ENCODE measurements at regions of chr13 and their contacts with region 1.

Region 1: GRCh38 chr13:73081256-73081915 is 22.6 kb downstream of the KLF5 start:
- DNase-seq: no peak
- ATAC-seq: no peak
- H3K4me3 ChIP-seq: no peak overlapping the region
- H3K27ac ChIP-seq: no peak overlapping the region
- H3K4me1 ChIP-seq: no peaks in the 10 kb centered on the region
- H3K27me3 ChIP-seq: no peaks in the 10 kb centered on the region

Region 2: GRCh38 chr13:73385848-73386247 is 304.5 kb after region 1 on chr13:
- intact Hi-C with region 1: no loop called
- DNase-seq: no peak
- ATAC-seq: no peak
- H3K4me3 ChIP-seq: no peak overlapping the region
- H3K27ac ChIP-seq: no peak overlapping the region
- H3K4me1 ChIP-seq: no peaks in the 10 kb centered on the region
- H3K27me3 ChIP-seq: no peaks in the 10 kb centered on the region

Region 3: GRCh38 chr13:73708393-73708985 is 627.1 kb after region 1 on chr13:
- intact Hi-C with region 1: loop called in 1 of 4 experiments (anchors 10 kb)
- DNase-seq: no peak
- ATAC-seq: peak; percentile 54 to 61
- H3K4me3 ChIP-seq: no peak overlapping the region
- H3K27ac ChIP-seq: no peak overlapping the region
- H3K4me1 ChIP-seq: no peaks in the 10 kb centered on the region
- H3K27me3 ChIP-seq: no peaks in the 10 kb centered on the region

Measured in right cardiac atrium (tissue), 5 donors.